SK-N-SH (cell line): ENCODE measurements at regions of chr7 and their contacts with region 1.

Region 1: DNA sequence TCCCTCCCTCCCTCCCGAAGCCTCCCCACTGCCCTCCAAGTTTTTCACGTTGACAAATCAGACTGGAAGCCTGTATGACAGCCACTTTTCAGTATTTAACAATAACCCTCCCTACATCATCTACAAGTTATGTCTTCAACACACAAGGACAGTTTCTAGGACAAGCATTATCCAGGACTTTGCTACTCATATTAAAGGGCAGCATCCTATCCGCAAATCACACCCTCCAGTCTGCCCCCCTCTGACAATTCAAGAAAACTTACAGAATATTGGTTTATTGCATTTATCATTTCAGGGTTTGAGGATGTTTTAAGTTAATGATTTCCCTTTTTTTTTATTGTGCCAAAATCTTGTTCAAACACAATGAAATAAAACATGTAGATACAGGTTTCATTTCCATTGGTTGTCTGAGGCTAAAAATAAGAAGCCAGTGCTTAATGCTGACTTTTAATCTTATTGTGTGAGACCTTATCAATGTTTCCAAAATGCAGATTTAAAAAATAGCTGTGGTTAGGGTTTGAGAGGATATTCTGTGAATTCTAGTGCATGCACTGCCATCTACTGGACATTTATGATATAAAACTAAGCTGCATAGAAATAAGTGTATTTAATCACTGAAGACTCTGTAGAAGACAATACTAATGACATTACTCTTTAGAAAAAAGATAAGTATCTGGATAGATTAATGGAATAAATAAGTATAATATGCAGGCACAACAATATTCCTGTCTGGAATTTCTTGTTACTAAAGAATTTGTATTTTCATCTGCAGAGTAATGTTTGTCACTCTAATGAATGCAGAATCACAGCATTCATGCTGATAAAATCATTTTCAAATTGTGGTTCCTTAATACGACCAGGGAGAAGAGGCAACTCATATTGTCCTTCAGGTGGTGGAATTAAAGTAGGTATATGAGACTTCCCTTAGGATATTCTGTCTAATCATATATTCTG is 64.1 kb downstream of the CAV1 start:
- DNase-seq: peak; percentile 21
- H3K4me3 ChIP-seq: no peak overlapping the region; a peak in 1 of 4 replicates
- H3K27ac ChIP-seq: peak overlapping the region; percentile 7 to 76; a peak in 3 of 4 replicates
- H3K4me1 ChIP-seq: peaks cover 5 to 19% of the 10 kb centered on the region in 2 experiments; a peak in 3 of 4 replicates
- H3K27me3 ChIP-seq: no peaks in the 10 kb centered on the region; the same call in 1 of the 2 replicates
- CTCF ChIP-seq: peak; percentile 93
- EP300 ChIP-seq: 0 out of 4 replicates have a peak, but pooled peaks of 1 of the 2 experiments have one; percentile 1
- RAD21 ChIP-seq: peak; percentile 88

Region 2: DNA sequence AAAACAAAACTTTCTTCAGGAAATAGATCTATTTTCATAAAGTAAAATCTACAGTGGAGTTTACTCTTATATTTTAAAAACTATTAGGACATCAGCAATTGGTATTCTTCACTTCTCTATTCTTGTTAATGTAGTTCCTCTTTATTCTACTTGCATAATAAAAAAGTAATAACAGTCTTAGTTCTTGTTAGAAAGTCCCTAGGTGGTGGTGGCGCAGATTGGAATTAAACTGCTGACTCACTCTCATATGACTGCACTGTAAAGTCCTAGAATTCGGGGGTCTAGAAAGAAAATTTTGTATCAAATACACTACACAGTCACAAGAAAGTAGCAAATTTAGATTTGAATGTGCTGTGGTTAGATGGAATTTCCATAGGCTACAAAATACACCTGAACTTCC is 423.2 kb before region 1 on chr7:
- CTCF ChIA-PET with region 1: interaction called, 78 read pairs
- POLR2A ChIA-PET with region 1: no interaction called
- DNase-seq: no peak
- H3K4me3 ChIP-seq: no peak overlapping the region
- H3K27ac ChIP-seq: no peak overlapping the region
- H3K4me1 ChIP-seq: no peaks in the 10 kb centered on the region
- H3K27me3 ChIP-seq: peaks cover 72% of the 10 kb centered on the region
- CTCF ChIP-seq: no peak
- EP300 ChIP-seq: no peak
- RAD21 ChIP-seq: no peak

Region 3: GRCh38 chr7:116236020-116236630 is 352.8 kb before region 1 on chr7:
- CTCF ChIA-PET with region 1: interaction called, 28 read pairs
- POLR2A ChIA-PET with region 1: no interaction called
- DNase-seq: peak; percentile 35
- H3K4me3 ChIP-seq: no peak overlapping the region
- H3K27ac ChIP-seq: no peak overlapping the region
- H3K4me1 ChIP-seq: peaks cover 18 to 19% of the 10 kb centered on the region in 2 experiments; a peak in 3 of 4 replicates
- H3K27me3 ChIP-seq: no peaks in the 10 kb centered on the region
- CTCF ChIP-seq: peak; percentile 95
- EP300 ChIP-seq: no peak
- RAD21 ChIP-seq: peak; percentile 93

Region 4: DNA sequence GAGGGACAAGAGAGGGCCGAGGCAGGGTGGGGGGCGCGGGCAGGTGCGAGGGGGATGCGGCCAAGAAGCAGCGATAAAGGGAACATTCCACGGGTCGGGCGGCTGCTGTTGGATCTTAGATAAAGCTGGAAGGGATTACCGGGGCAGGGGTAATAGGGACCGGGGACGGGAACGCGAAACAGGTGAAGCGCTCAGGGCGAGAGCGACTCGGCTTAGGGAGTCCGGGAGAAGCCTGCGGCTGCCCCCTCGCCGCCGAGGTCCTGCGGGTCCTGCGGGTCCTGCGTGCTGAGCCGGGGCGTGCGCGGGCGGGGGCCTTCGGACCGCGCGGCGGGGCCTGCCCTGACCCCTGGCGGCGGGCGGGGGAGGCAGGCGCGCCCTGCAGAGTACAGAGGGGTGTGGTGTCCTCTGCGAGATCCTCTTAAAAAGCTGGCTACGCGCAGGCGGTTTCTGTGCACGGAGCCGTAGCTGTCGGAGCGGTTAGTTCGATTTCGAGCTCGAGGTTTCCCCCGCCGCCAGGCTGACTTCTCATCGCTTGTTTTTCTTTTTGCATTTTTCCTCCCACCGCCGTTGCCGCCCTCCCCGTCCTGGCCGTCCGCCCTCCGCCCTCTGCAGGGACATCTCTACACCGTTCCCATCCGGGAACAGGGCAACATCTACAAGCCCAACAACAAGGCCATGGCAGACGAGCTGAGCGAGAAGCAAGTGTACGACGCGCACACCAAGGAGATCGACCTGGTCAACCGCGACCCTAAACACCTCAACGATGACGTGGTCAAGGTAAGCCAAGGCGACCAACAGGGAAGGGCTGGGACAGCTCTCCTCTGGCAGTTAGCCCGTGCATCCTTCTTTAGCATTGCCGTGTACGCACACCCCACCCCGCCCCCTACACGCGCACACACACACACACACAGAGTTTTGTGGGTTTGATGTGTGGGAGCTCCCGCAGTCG is 62.7 kb before region 1 on chr7:
- CTCF ChIA-PET with region 1: interaction called, 15 read pairs
- POLR2A ChIA-PET with region 1: no interaction called
- DNase-seq: peak; percentile 90
- H3K4me3 ChIP-seq: peak overlapping the region; percentile 57 to 84
- H3K27ac ChIP-seq: peak overlapping the region; percentile 91 to 99
- H3K4me1 ChIP-seq: peaks cover 4 to 48% of the 10 kb centered on the region in 2 experiments
- H3K27me3 ChIP-seq: no peaks in the 10 kb centered on the region
- CTCF ChIP-seq: peak; percentile 95
- EP300 ChIP-seq: no peak; a peak in 1 of 4 replicates
- RAD21 ChIP-seq: peak; percentile 48; the same call in 1 of the 2 replicates

Region 5: GRCh38 chr7:116601426-116601825 is 12.5 kb after region 1 on chr7:
- CTCF ChIA-PET with region 1: interaction called, 59 read pairs
- POLR2A ChIA-PET with region 1: no interaction called
- DNase-seq: no peak
- H3K4me3 ChIP-seq: no peak overlapping the region
- H3K27ac ChIP-seq: no peak overlapping the region
- H3K4me1 ChIP-seq: no peaks in the 10 kb centered on the region
- H3K27me3 ChIP-seq: peaks cover 14% of the 10 kb centered on the region; the same call in 1 of the 2 replicates
- CTCF ChIP-seq: no peak
- EP300 ChIP-seq: no peak
- RAD21 ChIP-seq: no peak